Activated CD4-positive, alpha-beta T cell treated with anti-CD3 and anti-CD28 coated beads, Interleukin-2, amount 10 ng/mL, durations not matched to agents 24 days and 14 days (primary cell): ENCODE measurements at regions of chr12 and their contacts with region 1.

Region 1: DNA sequence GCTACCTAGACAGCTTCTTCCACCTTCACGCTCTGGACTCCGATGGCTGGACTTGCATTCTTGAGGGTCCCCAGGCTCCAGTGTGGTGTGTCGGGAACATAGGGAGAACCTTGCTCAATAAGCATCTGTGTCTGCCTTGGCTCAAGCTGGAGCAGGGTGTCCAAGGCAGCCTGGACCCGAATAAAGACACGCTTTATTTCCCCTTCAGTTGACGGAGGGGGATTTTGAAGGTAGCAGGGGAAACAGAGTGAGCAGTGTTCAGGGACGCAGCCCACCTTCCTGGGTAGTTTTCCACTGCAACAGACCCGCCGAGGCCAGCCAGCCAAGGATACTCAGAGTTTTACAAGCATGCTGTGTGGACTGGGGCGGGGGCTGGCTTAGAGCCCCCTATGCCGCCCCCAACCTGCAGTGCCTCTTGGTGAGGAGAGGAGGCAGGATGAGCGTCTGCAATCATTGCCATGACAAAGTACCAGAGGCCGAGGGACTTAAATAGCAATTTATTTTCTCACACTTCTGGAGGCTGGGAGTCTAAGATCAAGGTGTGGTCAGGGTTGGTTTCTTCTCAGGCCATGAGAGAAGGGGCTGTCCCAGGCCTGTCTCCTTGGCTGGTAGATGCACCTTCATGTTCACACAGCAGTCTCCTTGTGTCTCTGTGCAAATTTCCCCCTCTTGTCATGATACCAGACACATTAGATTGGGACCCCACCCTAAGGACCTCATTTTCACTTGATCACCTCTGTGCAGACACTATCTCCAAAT is 201.2 kb downstream of the CHST11 start:
- DNase-seq: no peak
- H3K4me3 Mint-ChIP-seq: no peak overlapping the region
- H3K27ac Mint-ChIP-seq: peak overlapping the region; percentile 52
- H3K4me1 Mint-ChIP-seq: peaks cover 21% of the 10 kb centered on the region
- H3K27me3 Mint-ChIP-seq: no peaks in the 10 kb centered on the region

Region 2: GRCh38 chr12:104641862-104642261 is 16.0 kb before region 1 on chr12:
- intact Hi-C with region 1: loop called (anchors 2 kb)
- DNase-seq: no peak
- H3K4me3 Mint-ChIP-seq: no peak overlapping the region
- H3K27ac Mint-ChIP-seq: no peak overlapping the region
- H3K4me1 Mint-ChIP-seq: peaks cover 52% of the 10 kb centered on the region
- H3K27me3 Mint-ChIP-seq: no peaks in the 10 kb centered on the region